Left lung (tissue), 14 donors: ENCODE measurements at regions of chr10 and their contacts with region 1.

Region 1: DNA sequence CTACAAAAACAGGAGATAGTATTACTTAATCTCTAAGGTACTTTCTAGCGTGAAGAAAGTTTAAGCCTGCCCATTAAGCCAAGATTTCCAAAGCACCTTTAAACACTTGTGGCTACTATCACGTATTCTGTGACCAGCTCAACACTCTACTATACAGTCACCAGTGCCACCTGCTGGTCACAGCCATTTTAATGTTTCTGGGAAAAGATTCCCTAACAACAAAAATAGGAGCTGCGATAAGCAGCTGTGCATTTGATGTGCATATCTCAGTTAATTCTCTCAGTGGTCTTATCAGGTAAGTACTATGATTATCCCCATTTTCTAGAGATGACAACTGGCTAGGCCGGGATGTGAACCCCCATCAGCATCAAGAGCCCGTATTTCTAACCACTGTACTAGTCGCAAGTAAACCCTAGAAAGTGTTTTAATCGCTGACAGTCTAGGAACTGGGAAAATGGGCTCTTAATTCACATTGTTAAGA is 860 bp downstream of the SEC31B start:
- DNase-seq: peak in 3 of 4 donors; percentile 38 to 62 (median 51)
- ATAC-seq: peak; percentile 93
- H3K4me3 ChIP-seq: peak overlapping the region in 1 of 2 donors; percentile 30
- H3K27ac ChIP-seq: no peak overlapping the region
- H3K4me1 ChIP-seq: peaks cover 9 to 17% of the 10 kb centered on the region in 2 donors
- H3K27me3 ChIP-seq: peaks cover 0 to 13% of the 10 kb centered on the region in 2 donors
- CTCF ChIP-seq: peak; percentile 60 to 61

Region 2: DNA sequence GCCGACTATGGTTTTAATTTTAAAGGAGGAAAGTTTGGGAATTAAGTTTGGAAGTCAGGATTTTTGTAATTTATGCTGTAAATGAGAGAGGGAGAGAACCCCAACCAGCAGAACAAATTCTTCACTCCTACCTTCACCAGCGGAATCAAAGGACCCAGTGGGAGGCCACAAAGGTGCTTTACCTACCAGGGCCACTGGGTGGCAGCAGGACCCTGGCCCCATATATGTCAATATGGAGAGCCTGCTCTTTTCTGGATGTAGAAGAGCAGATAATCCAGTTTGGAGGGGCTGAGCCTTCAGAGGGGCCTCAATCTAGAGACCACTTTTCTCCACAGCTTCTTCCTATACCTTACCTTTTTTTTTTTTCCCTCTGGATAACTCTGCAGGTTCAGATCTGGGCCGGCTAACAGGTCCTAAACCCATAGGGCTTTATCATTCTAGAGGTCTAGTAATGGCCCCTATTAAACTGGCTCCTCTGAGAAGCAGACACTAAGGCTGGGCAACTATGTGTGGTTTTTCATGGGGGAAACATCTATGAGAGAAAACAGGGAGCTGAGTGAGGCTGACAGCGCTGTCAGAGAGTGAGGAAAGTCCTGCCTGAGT is 180.3 kb before region 1 on chr10:
- intact Hi-C with region 1: loop called in 1 of 2 experiments (anchors 10 kb)
- DNase-seq: peak; percentile 56 to 87 (median 72)
- ATAC-seq: peak; percentile 84
- H3K4me3 ChIP-seq: no peak overlapping the region
- H3K27ac ChIP-seq: no peak overlapping the region
- H3K4me1 ChIP-seq: peaks cover 0 to 19% of the 10 kb centered on the region in 2 donors
- H3K27me3 ChIP-seq: no peaks in the 10 kb centered on the region
- CTCF ChIP-seq: peak; percentile 76 to 91

Region 3: DNA sequence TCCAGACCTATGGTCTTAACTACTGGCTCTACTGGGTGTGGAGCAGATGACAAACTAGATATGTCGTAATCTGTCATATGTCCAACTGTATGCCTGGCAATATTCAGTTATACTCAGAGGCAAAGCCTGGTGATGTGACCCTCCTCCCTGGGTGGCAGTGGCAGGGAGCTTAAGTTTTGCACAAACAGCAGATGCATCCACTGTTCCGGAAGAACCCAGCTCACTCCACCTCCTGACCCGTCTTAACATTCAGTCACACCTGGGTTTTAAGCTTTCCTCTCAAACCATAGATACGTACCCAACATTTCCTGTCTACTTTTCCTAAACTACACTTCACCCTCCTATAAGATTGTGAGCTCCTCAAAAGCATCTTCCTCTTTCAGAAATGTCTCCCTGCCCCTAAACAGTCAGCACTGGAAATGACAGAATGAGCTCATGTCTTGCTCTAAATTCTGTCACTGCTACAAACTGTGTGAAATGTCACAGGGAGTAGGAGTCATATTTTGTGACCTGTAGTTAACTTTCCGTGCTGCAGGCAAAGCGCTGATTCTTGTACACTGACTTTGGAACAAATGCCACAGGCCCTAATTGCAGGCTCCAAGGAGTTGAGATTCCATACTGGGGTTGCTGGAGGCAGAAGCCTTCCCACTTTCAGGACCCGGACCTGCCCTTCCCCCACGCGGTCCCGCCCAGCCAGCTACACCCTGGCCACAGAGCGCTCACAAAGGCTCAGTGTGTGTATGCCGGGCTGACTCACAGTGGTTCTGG is 147.9 kb before region 1 on chr10:
- intact Hi-C with region 1: no loop called
- DNase-seq: peak in 3 of 4 donors; percentile 27 to 91 (median 87)
- ATAC-seq: peak; percentile 58
- H3K4me3 ChIP-seq: no peak overlapping the region
- H3K27ac ChIP-seq: peak overlapping the region; percentile 83 to 84
- H3K4me1 ChIP-seq: peaks cover 29 to 67% of the 10 kb centered on the region in 2 donors
- H3K27me3 ChIP-seq: no peaks in the 10 kb centered on the region
- CTCF ChIP-seq: no peak

Region 4: GRCh38 chr10:100637785-100638184 is 119.0 kb after region 1 on chr10:
- intact Hi-C with region 1: no loop called
- DNase-seq: no peak
- ATAC-seq: peak; percentile 25
- H3K4me3 ChIP-seq: no peak overlapping the region
- H3K27ac ChIP-seq: no peak overlapping the region
- H3K4me1 ChIP-seq: no peaks in the 10 kb centered on the region
- H3K27me3 ChIP-seq: peaks cover 19 to 100% of the 10 kb centered on the region in 2 donors
- CTCF ChIP-seq: no peak

Region 5: GRCh38 chr10:100743626-100744135 is 224.9 kb after region 1 on chr10:
- intact Hi-C with region 1: no loop called
- DNase-seq: peak in 1 of 4 donors; percentile 68
- ATAC-seq: peak; percentile 87
- H3K4me3 ChIP-seq: no peak overlapping the region
- H3K27ac ChIP-seq: no peak overlapping the region
- H3K4me1 ChIP-seq: peaks cover 4 to 57% of the 10 kb centered on the region in 2 donors
- H3K27me3 ChIP-seq: peaks cover 96 to 100% of the 10 kb centered on the region in 2 donors
- CTCF ChIP-seq: peak; percentile 41 to 50